ENCODE measurements at regions of chr2 and their contacts with region 1.

Region 1: DNA sequence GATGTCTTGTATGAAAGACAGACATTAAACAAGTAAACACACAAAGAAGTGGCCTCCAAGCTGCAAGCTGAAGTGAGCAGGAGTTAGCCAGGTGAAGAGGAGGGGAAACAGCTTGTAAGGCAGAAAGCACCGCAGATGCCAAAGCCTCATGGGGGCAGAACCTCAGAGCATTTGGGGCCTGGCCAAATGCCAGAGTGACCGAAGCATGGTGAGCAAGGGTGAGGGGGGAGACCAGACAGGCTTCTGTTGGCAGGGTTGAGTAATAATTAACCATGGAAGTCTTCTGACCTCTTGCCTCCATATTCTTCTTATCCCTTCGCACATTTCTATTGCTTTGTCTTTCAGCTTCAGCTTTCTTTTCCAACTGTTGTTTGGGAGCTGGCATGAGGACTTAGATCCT is 5.6 kb downstream of the QPCT start:
- DNase-seq: peak in 1 of 2 experiments; percentile 52
- ATAC-seq: peak; percentile 22 to 64; a peak in 3 of 6 replicates
- H3K4me3 ChIP-seq: no peak overlapping the region
- H3K27ac ChIP-seq: peak overlapping the region; percentile 11 to 60; a peak in 3 of 6 replicates
- H3K4me1 ChIP-seq: peaks cover 28% of the 10 kb centered on the region
- CTCF ChIP-seq: no peak
- EP300 ChIP-seq: no peak
- POLR2A ChIP-seq: no peak
- RAD21 ChIP-seq: no peak

Region 2: GRCh38 chr2:36973320-36973719 is 376.7 kb before region 1 on chr2:
- CTCF ChIA-PET with region 1: no interaction called
- POLR2A ChIA-PET with region 1: no interaction called
- DNase-seq: no peak
- ATAC-seq: no peak
- H3K4me3 ChIP-seq: no peak overlapping the region
- H3K27ac ChIP-seq: no peak overlapping the region
- H3K4me1 ChIP-seq: no peaks in the 10 kb centered on the region
- CTCF ChIP-seq: no peak
- EP300 ChIP-seq: no peak
- POLR2A ChIP-seq: no peak
- RAD21 ChIP-seq: no peak

Region 3: GRCh38 chr2:37397166-37397565 is 47.1 kb after region 1 on chr2:
- CTCF ChIA-PET with region 1: interaction called, 10 read pairs
- POLR2A ChIA-PET with region 1: no interaction called
- DNase-seq: no peak
- ATAC-seq: no peak
- H3K4me3 ChIP-seq: no peak overlapping the region
- H3K27ac ChIP-seq: no peak overlapping the region
- H3K4me1 ChIP-seq: no peaks in the 10 kb centered on the region
- CTCF ChIP-seq: no peak
- EP300 ChIP-seq: no peak
- POLR2A ChIP-seq: no peak
- RAD21 ChIP-seq: no peak